Right ventricle myocardium inferior (tissue), 1 donor: ENCODE measurements at regions of chr17 and their contacts with region 1.

Region 1: DNA sequence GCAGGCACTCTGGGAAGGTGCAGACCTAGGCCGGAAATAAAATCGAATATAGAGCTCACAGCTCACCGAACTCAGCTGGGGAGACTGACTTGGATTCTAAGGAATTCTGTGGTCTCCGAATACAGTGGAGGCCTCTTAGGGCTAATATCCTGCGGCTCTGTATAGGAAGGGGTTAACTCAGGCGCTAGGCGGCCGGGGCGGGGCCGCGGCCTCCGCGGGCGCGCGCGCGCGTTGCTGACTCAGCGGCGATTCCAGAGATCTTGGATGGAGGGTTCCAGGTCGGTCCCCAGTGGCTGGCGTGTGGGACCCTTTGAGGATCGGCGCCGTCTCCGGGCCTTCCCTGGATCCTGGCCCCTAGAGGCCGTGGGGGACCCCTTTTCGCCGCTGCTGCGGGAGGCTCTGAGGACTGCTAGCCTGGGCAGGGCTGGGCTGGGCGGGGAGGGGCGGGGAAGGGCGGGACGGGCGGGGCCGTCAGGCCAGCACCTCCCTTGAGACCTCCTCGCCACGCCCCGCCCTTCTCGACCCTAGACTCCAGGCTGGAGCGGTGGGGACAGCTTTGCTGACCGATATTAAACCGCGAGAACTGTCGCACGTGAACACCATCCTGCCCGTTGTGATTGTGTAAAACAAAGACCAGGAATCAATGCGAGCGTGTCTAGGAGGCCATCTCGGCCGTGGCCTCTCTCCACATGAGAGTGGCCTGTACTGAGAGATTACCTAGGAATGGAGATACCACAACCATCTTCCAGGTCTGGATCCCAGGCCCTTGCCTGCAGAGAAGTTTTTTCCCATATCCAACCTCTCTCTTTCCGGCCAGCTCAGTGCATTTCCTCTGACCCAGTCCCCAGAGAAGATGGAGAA is 1.4 kb upstream of the PLEKHH3 start:
- DNase-seq: peak; percentile 94
- ATAC-seq: peak; percentile 50

Region 2: GRCh38 chr17:42577532-42578281 is 100.4 kb before region 1 on chr17 and contains the start of gene PSMC3IP:
- intact Hi-C with region 1: loop called (anchors 2 kb)
- DNase-seq: peak; percentile 97
- ATAC-seq: peak; percentile 95
- total RNA-seq, gene PSMC3IP: 3.4 TPM

Region 3: GRCh38 chr17:42609182-42609813 is 68.9 kb before region 1 on chr17 and contains the starts of genes RETREG3 and TUBG1:
- intact Hi-C with region 1: loop called (anchors 2 kb)
- DNase-seq: peak; percentile 100
- ATAC-seq: peak; percentile 99
- total RNA-seq, gene RETREG3: 22.5 TPM
- total RNA-seq, gene TUBG1: 54.3 TPM

Region 4: DNA sequence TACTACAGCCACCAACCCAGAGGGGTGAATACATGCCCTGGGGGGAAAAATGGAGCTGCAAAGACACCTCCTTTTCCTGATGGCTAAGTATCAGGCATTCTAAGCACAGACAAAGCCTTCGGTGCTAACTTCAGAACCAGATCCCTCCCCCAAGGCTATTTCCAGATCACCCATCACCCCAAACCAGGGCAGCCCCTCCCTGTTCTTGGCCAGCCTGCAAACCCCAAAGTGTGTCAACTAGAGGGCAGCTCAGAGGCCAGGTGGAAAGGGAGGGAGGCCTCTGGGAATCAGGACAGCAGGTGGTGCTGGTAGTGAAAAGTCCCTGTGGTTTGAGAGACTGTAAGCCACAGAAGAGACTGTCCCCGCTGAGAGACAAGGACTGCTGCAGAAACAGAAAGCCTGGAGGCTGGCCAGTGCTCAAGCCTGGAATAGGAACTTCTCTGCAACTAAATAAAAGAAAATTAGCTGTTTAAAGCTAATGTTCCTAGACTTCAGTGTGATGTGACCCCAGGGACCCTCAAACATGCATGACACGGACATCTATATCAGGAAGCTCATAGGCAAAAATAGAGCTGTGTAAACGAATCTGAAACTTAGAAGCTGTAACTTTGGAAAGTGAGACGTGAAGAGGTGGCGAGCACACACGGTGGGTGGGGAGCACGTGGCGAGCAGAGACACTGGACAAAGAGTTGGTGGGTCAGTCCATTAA is 59.6 kb before region 1 on chr17:
- intact Hi-C with region 1: loop called (anchors 2 kb)
- DNase-seq: no peak
- ATAC-seq: peak; percentile 95

Region 5: GRCh38 chr17:42878123-42878880 is 200.2 kb after region 1 on chr17:
- intact Hi-C with region 1: no loop called
- DNase-seq: no peak
- ATAC-seq: no peak